ENCODE measurements at regions of chr6 and their contacts with region 1.

Region 1: GRCh38 chr6:48087448-48087847 is 23.5 kb downstream of the PTCHD4 start:
- DNase-seq: peak; percentile 43
- H3K4me3 Mint-ChIP-seq: no peak overlapping the region
- H3K27ac Mint-ChIP-seq: no peak overlapping the region
- H3K4me1 Mint-ChIP-seq: no peaks in the 10 kb centered on the region
- H3K27me3 Mint-ChIP-seq: no peaks in the 10 kb centered on the region
- CTCF ChIP-seq: peak; percentile 42

Region 2: DNA sequence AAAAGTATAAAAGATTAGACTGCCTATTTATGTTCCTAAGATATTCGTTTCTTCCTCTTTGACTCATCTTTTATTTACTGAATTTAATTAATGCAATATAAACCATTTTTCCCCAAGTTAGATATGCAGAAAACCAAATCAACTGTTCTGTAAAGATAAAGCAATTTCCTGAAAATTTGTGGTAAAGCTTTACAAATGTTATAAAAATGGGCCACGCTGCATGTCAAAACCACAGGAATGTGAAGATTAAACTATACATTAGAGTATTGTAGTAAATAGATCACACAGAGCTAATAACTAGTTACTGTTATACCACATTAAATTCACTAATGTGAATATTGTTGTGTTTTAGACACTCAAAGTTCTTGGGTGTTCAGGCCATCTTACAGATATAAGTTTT is 222.2 kb before region 1 on chr6:
- CTCF ChIA-PET with region 1: no interaction called
- POLR2A ChIA-PET with region 1: no interaction called
- intact Hi-C with region 1: no loop called
- DNase-seq: no peak
- H3K4me3 Mint-ChIP-seq: no peak overlapping the region
- H3K27ac Mint-ChIP-seq: no peak overlapping the region
- H3K4me1 Mint-ChIP-seq: no peaks in the 10 kb centered on the region
- H3K27me3 Mint-ChIP-seq: no peaks in the 10 kb centered on the region
- CTCF ChIP-seq: no peak

Region 3: DNA sequence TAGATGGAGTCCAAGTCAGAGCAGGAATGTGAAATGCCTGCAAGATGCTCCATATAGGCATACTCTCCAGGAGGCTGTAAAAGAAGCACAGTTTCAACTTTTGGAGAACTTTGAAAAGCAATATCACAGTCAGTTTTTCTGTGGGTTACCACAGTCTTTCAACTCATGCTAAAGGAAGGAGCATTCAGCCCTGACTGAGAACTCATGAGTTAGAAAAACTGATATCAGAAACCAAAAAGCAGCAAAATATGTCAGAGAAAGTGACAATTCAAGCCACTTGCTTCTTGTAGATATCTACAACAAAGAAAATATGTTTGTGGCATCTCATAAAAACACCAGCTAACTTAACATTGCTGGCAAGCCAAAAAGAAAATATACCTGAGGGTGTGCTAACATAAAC is 59.6 kb after region 1 on chr6:
- CTCF ChIA-PET with region 1: interaction called, 13 read pairs
- POLR2A ChIA-PET with region 1: no interaction called
- intact Hi-C with region 1: no loop called
- DNase-seq: no peak
- H3K4me3 Mint-ChIP-seq: no peak overlapping the region
- H3K27ac Mint-ChIP-seq: no peak overlapping the region
- H3K4me1 Mint-ChIP-seq: peaks cover 13% of the 10 kb centered on the region
- H3K27me3 Mint-ChIP-seq: no peaks in the 10 kb centered on the region
- CTCF ChIP-seq: no peak

Region 4: DNA sequence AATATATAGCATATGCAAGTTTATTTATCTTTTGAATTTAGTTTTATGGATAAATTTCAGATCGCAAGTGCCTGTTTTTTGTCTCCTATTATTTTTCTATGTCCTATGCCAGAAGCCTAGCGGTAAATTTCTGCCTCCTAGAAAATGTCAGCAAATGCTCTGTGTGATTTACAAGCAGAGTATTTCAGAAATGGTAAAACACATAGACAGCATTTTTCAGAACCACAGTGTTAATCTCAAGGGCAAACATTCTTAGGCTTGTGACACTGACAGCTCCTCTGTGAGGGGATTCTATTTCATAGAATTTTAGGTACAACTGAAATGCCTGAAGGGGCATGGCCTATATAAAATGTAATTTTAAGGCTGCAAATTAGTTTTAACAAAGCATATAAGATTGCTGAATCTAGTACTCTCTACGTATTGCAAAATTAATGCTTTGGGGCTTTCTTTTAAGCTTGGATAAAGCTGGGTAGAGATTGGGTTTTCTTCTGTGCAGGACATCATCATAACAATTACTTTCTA is 113.5 kb after region 1 on chr6:
- CTCF ChIA-PET with region 1: no interaction called
- POLR2A ChIA-PET with region 1: no interaction called
- intact Hi-C with region 1: no loop called
- DNase-seq: no peak
- H3K4me3 Mint-ChIP-seq: no peak overlapping the region
- H3K27ac Mint-ChIP-seq: no peak overlapping the region
- H3K4me1 Mint-ChIP-seq: no peaks in the 10 kb centered on the region
- H3K27me3 Mint-ChIP-seq: no peaks in the 10 kb centered on the region
- CTCF ChIP-seq: no peak

Region 5: DNA sequence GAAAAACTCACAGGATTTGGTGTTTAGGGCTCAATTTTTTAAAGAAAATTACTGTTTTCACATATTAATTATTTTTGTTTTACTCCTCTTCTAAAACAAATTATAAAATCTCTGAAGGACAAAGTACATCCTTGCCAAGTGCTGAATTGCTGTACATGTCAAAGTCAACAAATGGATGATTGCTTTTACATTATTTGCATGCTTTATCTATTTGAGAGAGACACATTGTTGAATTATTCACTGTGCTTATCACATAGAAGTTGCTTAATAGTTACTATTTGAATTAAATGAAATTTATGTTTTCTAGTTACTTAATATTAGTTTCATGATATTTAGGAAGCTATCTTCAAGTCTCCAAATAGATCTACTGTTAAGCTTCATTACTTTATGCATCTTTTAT is 342.2 kb after region 1 on chr6:
- CTCF ChIA-PET with region 1: no interaction called
- POLR2A ChIA-PET with region 1: no interaction called
- intact Hi-C with region 1: loop called (anchors 10 kb)
- DNase-seq: no peak
- H3K4me3 Mint-ChIP-seq: no peak overlapping the region
- H3K27ac Mint-ChIP-seq: peak overlapping the region; percentile 74
- H3K4me1 Mint-ChIP-seq: peaks cover 29% of the 10 kb centered on the region
- H3K27me3 Mint-ChIP-seq: no peaks in the 10 kb centered on the region
- CTCF ChIP-seq: no peak

Region 6: DNA sequence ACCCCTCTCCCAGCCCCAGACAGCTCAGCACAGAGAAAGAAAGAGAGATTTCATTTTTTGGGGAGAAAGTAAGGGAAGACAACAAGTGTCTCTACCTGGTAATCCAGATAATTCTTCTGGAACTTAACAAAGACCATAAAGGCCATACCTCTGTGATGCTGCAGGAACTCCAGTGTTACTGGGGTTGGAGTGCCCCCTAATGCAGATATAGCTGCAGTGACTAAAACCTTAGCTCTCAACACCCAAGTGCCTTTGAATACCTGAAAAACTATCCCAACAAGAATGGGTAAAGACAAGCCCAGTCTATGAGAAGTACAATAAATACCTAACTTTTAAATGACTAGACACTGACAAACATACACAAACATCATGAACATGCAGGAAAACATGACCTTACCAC is 388.8 kb after region 1 on chr6:
- CTCF ChIA-PET with region 1: interaction called, 4 read pairs
- POLR2A ChIA-PET with region 1: no interaction called
- intact Hi-C with region 1: loop called (anchors 1 kb)
- DNase-seq: peak; percentile 38
- H3K4me3 Mint-ChIP-seq: no peak overlapping the region
- H3K27ac Mint-ChIP-seq: no peak overlapping the region
- H3K4me1 Mint-ChIP-seq: no peaks in the 10 kb centered on the region
- H3K27me3 Mint-ChIP-seq: no peaks in the 10 kb centered on the region
- CTCF ChIP-seq: peak; percentile 27

Region 7: GRCh38 chr6:48765352-48765961 is 678.0 kb after region 1 on chr6:
- CTCF ChIA-PET with region 1: interaction called, 33 read pairs
- POLR2A ChIA-PET with region 1: no interaction called
- intact Hi-C with region 1: loop called (anchors 1 kb)
- DNase-seq: peak; percentile 74
- H3K4me3 Mint-ChIP-seq: no peak overlapping the region
- H3K27ac Mint-ChIP-seq: peak overlapping the region; percentile 39
- H3K4me1 Mint-ChIP-seq: peaks cover 19% of the 10 kb centered on the region
- H3K27me3 Mint-ChIP-seq: no peaks in the 10 kb centered on the region
- CTCF ChIP-seq: peak; percentile 51

Region 8: GRCh38 chr6:48826901-48827701 is 739.7 kb after region 1 on chr6:
- CTCF ChIA-PET with region 1: no interaction called
- POLR2A ChIA-PET with region 1: no interaction called
- intact Hi-C with region 1: loop called (anchors 5 kb)
- DNase-seq: peak; percentile 98
- H3K4me3 Mint-ChIP-seq: peak overlapping the region; percentile 69
- H3K27ac Mint-ChIP-seq: peak overlapping the region; percentile 100
- H3K4me1 Mint-ChIP-seq: peaks cover 29% of the 10 kb centered on the region
- H3K27me3 Mint-ChIP-seq: no peaks in the 10 kb centered on the region
- CTCF ChIP-seq: no peak

Region 9: GRCh38 chr6:49025273-49026240 is 938.1 kb after region 1 on chr6:
- CTCF ChIA-PET with region 1: no interaction called
- POLR2A ChIA-PET with region 1: no interaction called
- intact Hi-C with region 1: no loop called
- DNase-seq: no peak
- H3K4me3 Mint-ChIP-seq: no peak overlapping the region
- H3K27ac Mint-ChIP-seq: no peak overlapping the region
- H3K4me1 Mint-ChIP-seq: no peaks in the 10 kb centered on the region
- H3K27me3 Mint-ChIP-seq: no peaks in the 10 kb centered on the region
- CTCF ChIP-seq: no peak

Region 10: DNA sequence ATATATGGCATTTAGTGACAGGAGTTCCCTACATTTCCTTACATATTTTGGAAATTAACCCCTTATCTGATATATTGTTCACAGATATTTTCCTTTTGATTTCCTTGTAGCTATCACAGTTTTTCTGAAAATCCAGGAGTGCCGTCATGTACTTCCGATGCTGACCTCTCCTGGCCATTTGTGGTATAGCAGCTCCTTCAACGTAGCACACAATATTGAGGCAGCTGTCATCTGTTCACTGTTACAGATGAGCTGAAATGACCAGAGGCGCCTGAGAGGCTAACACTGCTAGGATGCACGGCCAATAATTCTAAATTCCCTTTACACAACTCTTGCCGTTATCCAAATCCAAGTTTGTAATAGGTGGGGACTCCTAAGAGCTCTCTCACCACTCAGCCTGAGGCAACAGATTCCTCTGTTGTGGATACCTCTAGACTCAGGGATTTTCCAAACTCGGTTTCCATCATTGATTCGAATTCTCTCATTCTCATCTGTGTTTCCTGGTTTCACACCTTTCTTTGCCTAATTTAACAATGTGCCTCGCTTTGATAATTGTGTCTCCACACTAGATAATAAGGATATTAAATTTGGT is 1322.6 kb after region 1 on chr6:
- CTCF ChIA-PET with region 1: interaction called, 3 read pairs
- POLR2A ChIA-PET with region 1: no interaction called
- intact Hi-C with region 1: loop called (anchors 5 kb)
- DNase-seq: peak; percentile 76
- H3K4me3 Mint-ChIP-seq: no peak overlapping the region
- H3K27ac Mint-ChIP-seq: no peak overlapping the region
- H3K4me1 Mint-ChIP-seq: no peaks in the 10 kb centered on the region
- H3K27me3 Mint-ChIP-seq: no peaks in the 10 kb centered on the region
- CTCF ChIP-seq: peak; percentile 83

Measured in MCF 10A (cell line).